ENCODE measurements at regions of chrX and their contacts with region 1.

Region 1: DNA sequence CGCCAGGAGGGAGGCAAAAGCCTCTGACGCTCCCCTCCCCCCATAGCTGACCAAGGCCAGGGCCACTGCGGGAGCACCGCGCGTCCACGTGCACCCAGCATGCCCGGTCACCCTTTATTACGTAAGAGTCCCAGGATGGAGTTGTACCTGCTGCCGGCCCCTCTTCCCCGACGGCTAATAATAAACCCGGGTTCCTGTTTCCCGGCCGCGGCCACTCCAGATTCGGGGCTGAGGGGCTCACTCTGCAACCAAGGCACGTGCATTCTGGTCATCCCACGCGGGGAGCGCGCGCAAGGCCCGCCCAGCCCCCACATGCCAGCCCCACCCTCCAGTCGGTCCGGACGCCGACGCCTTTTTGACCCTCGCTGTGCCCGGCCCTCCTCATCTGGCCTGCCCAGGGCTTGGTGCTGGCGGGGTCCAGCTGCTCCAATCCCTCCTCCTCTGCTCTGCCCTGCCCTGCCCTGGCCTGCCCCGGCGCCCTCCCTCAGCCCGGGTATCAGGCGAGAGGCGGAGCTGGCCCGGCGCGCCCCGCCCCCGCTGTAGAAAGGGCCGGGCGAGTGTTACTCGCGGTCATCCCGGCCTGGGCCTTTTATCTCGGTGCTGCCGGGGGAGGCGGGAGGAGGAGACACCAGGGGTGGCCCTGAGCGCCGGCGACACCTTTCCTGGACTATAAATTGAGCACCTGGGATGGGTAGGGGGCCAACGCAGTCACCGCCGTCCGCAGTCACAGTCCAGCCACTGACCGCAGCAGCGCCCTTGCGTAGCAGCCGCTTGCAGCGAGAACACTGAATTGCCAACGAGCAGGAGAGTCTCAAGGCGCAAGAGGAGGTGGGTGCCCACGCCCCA is 2.5 kb downstream of the MID1IP1 start:
- DNase-seq: peak; percentile 77
- H3K4me3 ChIP-seq: peak overlapping the region; percentile 99
- H3K27ac ChIP-seq: peak overlapping the region; percentile 89
- H3K4me1 ChIP-seq: peaks cover 29% of the 10 kb centered on the region
- CTCF ChIP-seq: no peak

Region 2: GRCh38 chrX:37787423-37787869 is 1016.4 kb before region 1 on chrX:
- CTCF ChIA-PET with region 1: no interaction called
- POLR2A ChIA-PET with region 1: no interaction called
- intact Hi-C with region 1: loop called (anchors 10 kb)
- DNase-seq: peak; percentile 66
- H3K4me3 ChIP-seq: peak overlapping the region; percentile 58
- H3K27ac ChIP-seq: peak overlapping the region; percentile 99
- H3K4me1 ChIP-seq: peaks cover 78% of the 10 kb centered on the region
- CTCF ChIP-seq: no peak

Region 3: DNA sequence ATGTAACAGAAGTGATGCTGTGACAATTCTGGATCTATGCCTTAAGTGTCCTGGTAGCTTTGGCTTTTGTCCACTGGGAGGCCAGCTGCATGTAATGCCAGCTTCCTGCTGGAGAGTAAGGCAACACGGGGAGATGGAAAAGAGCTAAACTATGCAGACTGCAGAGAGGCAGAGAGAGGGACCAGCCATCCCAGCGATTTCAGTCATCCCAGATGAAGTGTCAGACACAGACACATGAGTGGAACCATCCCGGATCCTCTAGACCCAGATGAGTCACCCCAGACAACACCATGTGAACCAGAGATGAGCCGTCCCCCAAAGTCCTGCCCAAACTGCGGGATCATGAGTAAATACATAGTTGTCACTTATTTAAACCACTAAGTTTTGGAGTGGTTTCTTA is 597.8 kb before region 1 on chrX:
- CTCF ChIA-PET with region 1: no interaction called
- POLR2A ChIA-PET with region 1: no interaction called
- intact Hi-C with region 1: loop called (anchors 10 kb)
- DNase-seq: no peak
- H3K4me3 ChIP-seq: no peak overlapping the region
- H3K27ac ChIP-seq: peak overlapping the region; percentile 99
- H3K4me1 ChIP-seq: peaks cover 36% of the 10 kb centered on the region
- CTCF ChIP-seq: no peak

Region 4: DNA sequence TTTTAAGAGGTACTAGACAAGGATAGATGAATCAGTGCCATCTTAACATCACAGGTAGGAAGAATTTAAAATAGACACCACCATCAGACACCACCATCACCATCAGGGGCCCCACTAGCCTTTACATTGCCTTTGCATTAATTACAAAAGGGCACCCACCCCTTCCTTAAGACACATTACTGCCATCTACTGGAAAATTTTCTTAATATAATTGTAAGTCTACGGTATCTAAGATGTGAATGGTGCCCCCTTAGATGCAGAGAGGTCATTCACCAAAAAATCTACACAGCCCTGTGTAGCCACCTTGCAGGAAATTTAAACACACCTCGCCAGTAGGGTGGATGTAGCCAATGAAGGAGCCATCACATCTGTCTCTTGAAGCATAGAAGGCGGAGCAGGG is 181.6 kb after region 1 on chrX:
- CTCF ChIA-PET with region 1: no interaction called
- POLR2A ChIA-PET with region 1: interaction called, 3 read pairs
- intact Hi-C with region 1: loop called (anchors 1 kb)
- DNase-seq: peak; percentile 75
- H3K4me3 ChIP-seq: no peak overlapping the region
- H3K27ac ChIP-seq: no peak overlapping the region
- H3K4me1 ChIP-seq: peaks cover 4% of the 10 kb centered on the region
- CTCF ChIP-seq: peak; percentile 70

Region 5: DNA sequence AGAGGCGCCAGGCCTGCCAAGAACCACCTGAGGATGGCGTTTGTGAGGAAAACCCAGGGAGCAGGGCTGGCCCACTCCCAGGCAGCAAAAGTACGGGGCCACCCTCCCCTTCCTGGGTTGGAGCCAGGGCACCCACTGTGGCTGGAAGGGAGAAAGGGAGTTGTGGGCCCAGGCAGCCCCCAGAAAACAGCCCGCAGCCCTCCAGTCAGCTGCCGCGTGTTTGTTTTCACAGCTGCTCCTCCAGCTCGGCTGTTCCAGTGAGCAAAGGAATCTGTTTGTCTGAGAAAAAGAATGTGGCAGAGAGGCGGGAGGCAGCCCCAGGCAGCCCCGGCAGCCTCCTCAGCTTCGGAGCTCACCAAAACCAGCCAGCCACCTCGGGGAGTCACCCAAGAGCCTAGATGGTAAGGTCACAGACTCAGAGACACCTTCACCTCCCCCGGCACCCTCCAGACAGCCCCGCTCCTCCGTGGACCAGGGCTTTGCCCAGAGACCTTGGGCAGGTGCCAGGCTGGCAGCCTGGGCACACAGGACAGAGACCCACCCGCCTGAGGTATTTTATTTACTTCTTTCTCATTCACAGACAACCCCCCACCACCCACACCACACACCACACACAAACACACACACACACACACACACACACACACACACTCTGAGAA is 955.8 kb after region 1 on chrX:
- CTCF ChIA-PET with region 1: no interaction called
- POLR2A ChIA-PET with region 1: no interaction called
- intact Hi-C with region 1: loop called (anchors 10 kb)
- DNase-seq: no peak
- H3K4me3 ChIP-seq: no peak overlapping the region
- H3K27ac ChIP-seq: peak overlapping the region; percentile 47
- H3K4me1 ChIP-seq: peaks cover 91% of the 10 kb centered on the region
- CTCF ChIP-seq: no peak

Measured in OCI-LY7 (cell line).